CD4-positive, alpha-beta memory T cell (primary cell): ENCODE measurements at regions of chr15 and their contacts with region 1.

Region 1: GRCh38 chr15:73633111-73633990 is at the start of gene NPTN:
- DNase-seq: peak; percentile 96 to 98 (median 98)
- H3K4me3 ChIP-seq: peak within 1 kb of the TSS; percentile 40 to 69
- H3K4me3 Mint-ChIP-seq: peak within 1 kb of the TSS; percentile 87 to 94 (median 94)
- H3K27ac ChIP-seq: peak within 1 kb of the TSS; percentile 62
- H3K27ac Mint-ChIP-seq: peak within 1 kb of the TSS; percentile 80 to 96 (median 90)
- H3K4me1 ChIP-seq: peaks cover 37% of the 10 kb centered on the region
- H3K4me1 Mint-ChIP-seq: peaks cover 25 to 52% (median 46%) of the 10 kb centered on the region in 4 donors
- H3K27me3 ChIP-seq: no peaks in the 10 kb centered on the region
- H3K27me3 Mint-ChIP-seq: peaks cover 2 to 10% of the 10 kb centered on the region in 2 donors
- total RNA-seq, gene NPTN: 36.5 to 36.6 TPM

Region 2: GRCh38 chr15:73560501-73561117 is 72.7 kb before region 1 on chr15:
- CTCF ChIA-PET with region 1: interaction called, 49 read pairs
- POLR2A ChIA-PET with region 1: interaction called, 4 read pairs
- intact Hi-C with region 1: no loop called
- DNase-seq: peak; percentile 18 to 39 (median 35)
- H3K4me3 ChIP-seq: no peak overlapping the region
- H3K4me3 Mint-ChIP-seq: no peak overlapping the region
- H3K27ac ChIP-seq: no peak overlapping the region
- H3K27ac Mint-ChIP-seq: no peak overlapping the region
- H3K4me1 ChIP-seq: no peaks in the 10 kb centered on the region
- H3K4me1 Mint-ChIP-seq: no peaks in the 10 kb centered on the region
- H3K27me3 ChIP-seq: no peaks in the 10 kb centered on the region
- H3K27me3 Mint-ChIP-seq: no peaks in the 10 kb centered on the region

Region 3: GRCh38 chr15:73608941-73609340 is 24.4 kb before region 1 on chr15:
- CTCF ChIA-PET with region 1: interaction called, 55 read pairs
- POLR2A ChIA-PET with region 1: no interaction called
- intact Hi-C with region 1: no loop called
- DNase-seq: no peak
- H3K4me3 ChIP-seq: no peak overlapping the region
- H3K4me3 Mint-ChIP-seq: no peak overlapping the region
- H3K27ac ChIP-seq: no peak overlapping the region
- H3K27ac Mint-ChIP-seq: peak overlapping the region in 2 of 7 donors; percentile 0 to 13
- H3K4me1 ChIP-seq: peaks cover 17% of the 10 kb centered on the region
- H3K4me1 Mint-ChIP-seq: peaks cover 30 to 58% (median 51%) of the 10 kb centered on the region in 4 donors
- H3K27me3 ChIP-seq: no peaks in the 10 kb centered on the region
- H3K27me3 Mint-ChIP-seq: no peaks in the 10 kb centered on the region

Region 4: GRCh38 chr15:73647259-73648014 is 14.1 kb after region 1 on chr15:
- CTCF ChIA-PET with region 1: interaction called, 22 read pairs
- POLR2A ChIA-PET with region 1: interaction called, 6 read pairs
- intact Hi-C with region 1: no loop called
- DNase-seq: no peak
- H3K4me3 ChIP-seq: no peak overlapping the region
- H3K4me3 Mint-ChIP-seq: no peak overlapping the region
- H3K27ac ChIP-seq: no peak overlapping the region
- H3K27ac Mint-ChIP-seq: no peak overlapping the region
- H3K4me1 ChIP-seq: no peaks in the 10 kb centered on the region
- H3K4me1 Mint-ChIP-seq: no peaks in the 10 kb centered on the region
- H3K27me3 ChIP-seq: no peaks in the 10 kb centered on the region
- H3K27me3 Mint-ChIP-seq: peaks cover 9 to 11% of the 10 kb centered on the region in 2 donors

Region 5: DNA sequence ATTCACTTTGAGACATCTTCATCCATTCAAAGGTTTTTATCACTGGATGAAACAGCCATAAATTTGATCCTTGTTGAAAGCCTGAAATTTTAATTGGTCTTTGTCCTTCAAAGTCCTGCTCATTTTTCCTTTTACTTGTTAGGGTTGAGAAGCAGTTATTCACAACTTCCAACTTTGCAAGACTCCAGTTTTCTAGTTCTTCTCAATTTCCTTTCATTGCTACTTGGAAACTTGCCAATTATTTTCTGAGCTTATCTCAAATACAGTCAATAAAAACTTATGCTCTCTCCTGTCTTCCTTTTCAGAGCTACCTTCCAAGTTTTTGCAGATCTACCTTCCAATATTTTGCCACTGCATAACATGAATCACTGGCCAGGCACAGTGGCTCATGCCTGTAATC is 27.1 kb after region 1 on chr15:
- CTCF ChIA-PET with region 1: no interaction called
- POLR2A ChIA-PET with region 1: no interaction called
- intact Hi-C with region 1: no loop called
- DNase-seq: no peak
- H3K4me3 ChIP-seq: no peak overlapping the region
- H3K4me3 Mint-ChIP-seq: no peak overlapping the region
- H3K27ac ChIP-seq: no peak overlapping the region
- H3K27ac Mint-ChIP-seq: no peak overlapping the region
- H3K4me1 ChIP-seq: no peaks in the 10 kb centered on the region
- H3K4me1 Mint-ChIP-seq: peaks cover 0 to 8% (median 4%) of the 10 kb centered on the region in 4 donors
- H3K27me3 ChIP-seq: no peaks in the 10 kb centered on the region
- H3K27me3 Mint-ChIP-seq: peaks cover 15 to 20% of the 10 kb centered on the region in 2 donors

Region 6: DNA sequence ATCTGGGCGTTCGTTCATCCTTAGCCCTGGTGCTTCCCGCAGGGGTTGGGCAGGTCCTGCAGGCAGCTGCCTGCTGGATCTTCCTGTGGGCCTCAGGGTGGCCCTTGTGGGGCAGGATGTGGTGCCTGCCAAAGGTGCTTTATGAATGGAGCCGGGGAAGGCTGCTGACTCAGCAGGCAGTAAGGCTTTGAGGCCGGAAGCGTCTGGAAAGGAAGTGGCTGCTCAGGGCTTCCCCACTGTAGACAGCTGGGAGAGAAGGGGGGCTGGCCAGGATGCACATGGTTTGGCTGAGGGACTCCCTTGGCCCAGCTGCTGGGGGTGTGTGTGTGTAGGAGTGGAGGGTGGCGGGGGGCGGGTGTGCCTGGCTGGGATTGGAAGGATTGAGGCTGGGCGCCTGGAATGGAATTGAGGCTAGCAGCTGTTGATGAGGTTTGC is 63.7 kb after region 1 on chr15:
- CTCF ChIA-PET with region 1: interaction called, 59 read pairs
- POLR2A ChIA-PET with region 1: interaction called, 4 read pairs
- intact Hi-C with region 1: loop called (anchors 1 kb)
- DNase-seq: peak; percentile 74 to 91 (median 78)
- H3K4me3 ChIP-seq: no peak overlapping the region
- H3K4me3 Mint-ChIP-seq: peak overlapping the region; percentile 18 to 77 (median 49)
- H3K27ac ChIP-seq: no peak overlapping the region
- H3K27ac Mint-ChIP-seq: peak overlapping the region in 6 of 7 donors; percentile 13 to 93 (median 58)
- H3K4me1 ChIP-seq: peaks cover 24% of the 10 kb centered on the region
- H3K4me1 Mint-ChIP-seq: peaks cover 20 to 35% (median 21%) of the 10 kb centered on the region in 4 donors
- H3K27me3 ChIP-seq: no peaks in the 10 kb centered on the region
- H3K27me3 Mint-ChIP-seq: peaks cover 22 to 43% of the 10 kb centered on the region in 2 donors

Region 7: DNA sequence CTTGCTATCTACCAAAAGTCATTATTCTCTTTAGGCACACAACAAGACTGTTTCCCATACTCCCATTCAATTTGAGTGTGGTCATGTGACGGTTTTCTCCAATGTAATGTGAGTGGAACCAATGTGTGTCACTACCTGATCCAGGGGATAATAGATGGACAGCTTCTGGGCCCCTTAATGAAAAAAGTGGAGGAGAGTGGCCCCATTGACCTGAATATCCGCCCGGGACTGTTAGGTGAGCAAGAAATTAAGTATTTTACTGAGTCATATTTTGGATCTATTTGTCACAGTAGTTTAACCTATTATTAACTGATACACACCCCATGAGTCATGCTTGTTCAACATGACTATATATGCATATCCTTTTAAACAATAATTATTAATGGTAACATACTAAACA is 892.6 kb after region 1 on chr15:
- CTCF ChIA-PET with region 1: no interaction called
- POLR2A ChIA-PET with region 1: no interaction called
- intact Hi-C with region 1: loop called (anchors 10 kb)
- DNase-seq: no peak
- H3K4me3 ChIP-seq: no peak overlapping the region
- H3K4me3 Mint-ChIP-seq: no peak overlapping the region
- H3K27ac ChIP-seq: no peak overlapping the region
- H3K27ac Mint-ChIP-seq: no peak overlapping the region
- H3K4me1 ChIP-seq: no peaks in the 10 kb centered on the region
- H3K4me1 Mint-ChIP-seq: no peaks in the 10 kb centered on the region
- H3K27me3 ChIP-seq: no peaks in the 10 kb centered on the region
- H3K27me3 Mint-ChIP-seq: no peaks in the 10 kb centered on the region